Esophagus muscularis mucosa (tissue), 4 donors: ENCODE measurements at regions of chr12 and their contacts with region 1.

Region 1: DNA sequence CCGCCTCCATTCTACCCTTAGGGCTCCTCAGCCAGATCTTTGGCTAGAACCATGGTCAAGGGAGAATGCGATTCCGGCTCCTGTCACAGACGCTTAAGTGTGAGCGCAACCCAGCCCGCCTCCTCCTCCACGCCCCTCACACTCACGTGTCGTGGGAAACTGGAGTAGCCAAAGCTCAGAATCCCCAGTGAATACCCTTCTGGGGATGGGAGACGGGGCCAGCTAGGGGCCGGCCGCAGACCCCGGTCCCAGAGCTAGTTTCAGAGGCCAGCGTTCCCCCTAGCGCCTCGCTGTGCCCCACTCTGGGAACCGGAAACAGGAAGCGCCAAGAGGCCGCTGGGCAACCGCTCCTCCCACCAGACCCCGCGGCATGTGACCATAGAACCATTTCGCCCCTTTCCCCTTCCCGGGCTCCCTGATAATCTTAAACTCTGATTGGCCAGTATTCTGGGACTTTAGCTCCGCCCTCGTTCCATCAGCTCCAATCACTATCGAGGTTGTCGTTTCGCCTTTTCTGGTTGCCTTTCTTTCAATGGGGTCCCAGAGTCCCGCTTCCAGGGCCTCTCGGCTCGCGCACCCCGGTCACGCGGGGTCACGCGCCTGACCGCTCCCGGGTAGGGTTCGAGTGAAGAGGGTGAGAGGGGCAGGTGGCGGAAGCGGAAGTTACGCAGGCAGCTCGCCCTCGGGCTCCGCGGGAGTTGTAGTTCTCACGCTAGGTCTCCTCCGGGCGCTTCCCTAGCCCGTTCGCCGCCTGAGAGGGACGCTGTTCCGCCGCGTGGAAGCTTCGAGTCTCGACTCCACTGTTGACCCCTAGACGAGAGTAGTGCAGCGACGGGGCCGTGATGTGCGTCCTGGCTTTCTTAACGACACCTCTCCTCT is at the start of gene M6PR:
- DNase-seq: peak; percentile 99
- H3K4me3 ChIP-seq: peak within 1 kb of the TSS; percentile 78 to 91 (median 86)
- H3K27ac ChIP-seq: peak within 1 kb of the TSS; percentile 96 to 98 (median 98)
- H3K4me1 ChIP-seq: peaks cover 22 to 35% (median 31%) of the 10 kb centered on the region in 4 donors
- H3K27me3 ChIP-seq: no peaks in the 10 kb centered on the region
- CTCF ChIP-seq: peak; percentile 45 to 61 (median 47)
- EP300 ChIP-seq: no peak
- POLR2A ChIP-seq: peak; percentile 79
- total RNA-seq, gene M6PR: 72.0 to 96.3 (median 88.5) TPM

Region 2: GRCh38 chr12:8916154-8916553 is 33.4 kb before region 1 on chr12:
- intact Hi-C with region 1: loop called (anchors 1 kb)
- DNase-seq: no peak
- H3K4me3 ChIP-seq: no peak overlapping the region
- H3K27ac ChIP-seq: no peak overlapping the region
- H3K4me1 ChIP-seq: peaks cover 21 to 42% (median 35%) of the 10 kb centered on the region in 4 donors
- H3K27me3 ChIP-seq: no peaks in the 10 kb centered on the region
- CTCF ChIP-seq: no peak
- EP300 ChIP-seq: no peak
- POLR2A ChIP-seq: no peak

Region 3: GRCh38 chr12:9039397-9039977 is 89.9 kb after region 1 on chr12:
- intact Hi-C with region 1: loop called (anchors 5 kb)
- DNase-seq: no peak
- H3K4me3 ChIP-seq: no peak overlapping the region
- H3K27ac ChIP-seq: no peak overlapping the region
- H3K4me1 ChIP-seq: peaks cover 0 to 4% (median 2%) of the 10 kb centered on the region in 4 donors
- H3K27me3 ChIP-seq: no peaks in the 10 kb centered on the region
- CTCF ChIP-seq: peak; percentile 67 to 81 (median 72)
- EP300 ChIP-seq: no peak
- POLR2A ChIP-seq: no peak

Region 4: GRCh38 chr12:9049520-9050133 is 100.0 kb after region 1 on chr12:
- intact Hi-C with region 1: no loop called
- DNase-seq: no peak
- H3K4me3 ChIP-seq: no peak overlapping the region
- H3K27ac ChIP-seq: no peak overlapping the region
- H3K4me1 ChIP-seq: peaks cover 0 to 3% (median 0%) of the 10 kb centered on the region in 4 donors
- H3K27me3 ChIP-seq: no peaks in the 10 kb centered on the region
- CTCF ChIP-seq: peak; percentile 30 to 52 (median 32)
- EP300 ChIP-seq: no peak
- POLR2A ChIP-seq: no peak